ENCODE measurements at regions of chr19 and their contacts with region 1.

Region 1: DNA sequence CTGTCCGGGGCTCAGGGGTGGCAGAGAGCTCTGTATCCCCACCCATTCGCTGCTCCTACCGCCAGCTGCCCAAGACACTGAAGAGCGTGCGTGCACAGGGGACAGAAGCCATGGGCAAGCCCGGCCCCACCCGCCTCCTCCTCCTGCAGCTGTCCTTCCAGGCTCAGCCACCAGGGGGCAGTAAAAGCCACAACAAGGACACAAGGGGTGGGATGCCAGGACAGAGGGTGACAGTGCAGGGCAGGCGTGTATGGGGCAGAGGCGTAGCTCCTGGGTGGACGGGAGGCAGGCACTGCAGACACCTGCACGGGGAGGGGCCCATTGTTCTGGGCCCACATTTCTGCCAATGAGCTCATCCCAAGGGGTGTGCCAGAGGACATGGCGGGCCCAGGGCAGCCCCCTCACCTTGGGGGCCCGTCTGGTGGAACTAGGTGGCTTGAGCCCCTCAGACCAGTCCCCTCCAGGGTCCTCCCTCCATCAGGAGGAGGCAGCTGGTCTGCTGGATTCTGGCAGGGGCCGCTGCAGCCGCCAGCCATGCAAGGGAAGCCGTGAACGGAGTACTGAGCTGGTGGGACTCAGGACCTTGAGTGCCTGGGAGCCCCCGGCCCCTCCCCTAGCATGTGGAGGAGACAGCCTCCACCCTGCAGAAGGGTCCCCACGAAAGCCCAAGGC is 61.1 kb downstream of the MLLT1 start:
- DNase-seq: peak; percentile 89
- H3K4me3 Mint-ChIP-seq: no peak overlapping the region
- H3K27ac Mint-ChIP-seq: no peak overlapping the region
- H3K4me1 Mint-ChIP-seq: no peaks in the 10 kb centered on the region
- H3K27me3 Mint-ChIP-seq: no peaks in the 10 kb centered on the region

Region 2: DNA sequence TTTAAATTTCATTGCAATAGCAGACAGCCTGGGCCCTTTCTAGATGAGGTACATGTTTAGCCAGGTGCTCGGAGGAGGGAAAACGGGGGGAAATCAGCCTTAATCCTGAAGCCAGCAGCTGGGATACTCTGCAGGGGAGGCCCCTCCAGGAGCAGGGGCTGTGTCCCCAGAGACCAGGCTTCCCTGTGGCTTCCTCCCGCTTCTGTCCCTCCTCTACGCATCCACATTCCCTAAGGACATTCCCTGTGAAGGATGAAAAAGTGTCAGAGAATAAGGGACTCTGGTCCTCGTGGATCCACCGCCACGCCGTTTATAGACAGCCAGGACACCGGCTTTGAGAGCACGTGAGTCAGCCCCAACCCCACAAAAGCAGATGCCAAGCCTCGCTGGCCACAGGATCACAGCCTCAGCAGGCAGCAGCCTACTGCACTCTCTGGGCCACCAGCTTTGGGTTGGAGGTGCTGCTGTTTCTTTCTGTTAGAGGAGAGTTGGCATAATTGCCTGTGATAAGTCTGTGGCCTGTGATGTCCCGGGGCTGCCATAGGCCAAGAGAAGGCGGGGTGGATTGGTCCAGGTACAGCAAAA is 204.0 kb before region 1 on chr19:
- CTCF ChIA-PET with region 1: no interaction called
- POLR2A ChIA-PET with region 1: no interaction called
- intact Hi-C with region 1: no loop called
- DNase-seq: no peak
- H3K4me3 Mint-ChIP-seq: no peak overlapping the region
- H3K27ac Mint-ChIP-seq: no peak overlapping the region
- H3K4me1 Mint-ChIP-seq: no peaks in the 10 kb centered on the region
- H3K27me3 Mint-ChIP-seq: peaks cover 1% of the 10 kb centered on the region

Region 3: DNA sequence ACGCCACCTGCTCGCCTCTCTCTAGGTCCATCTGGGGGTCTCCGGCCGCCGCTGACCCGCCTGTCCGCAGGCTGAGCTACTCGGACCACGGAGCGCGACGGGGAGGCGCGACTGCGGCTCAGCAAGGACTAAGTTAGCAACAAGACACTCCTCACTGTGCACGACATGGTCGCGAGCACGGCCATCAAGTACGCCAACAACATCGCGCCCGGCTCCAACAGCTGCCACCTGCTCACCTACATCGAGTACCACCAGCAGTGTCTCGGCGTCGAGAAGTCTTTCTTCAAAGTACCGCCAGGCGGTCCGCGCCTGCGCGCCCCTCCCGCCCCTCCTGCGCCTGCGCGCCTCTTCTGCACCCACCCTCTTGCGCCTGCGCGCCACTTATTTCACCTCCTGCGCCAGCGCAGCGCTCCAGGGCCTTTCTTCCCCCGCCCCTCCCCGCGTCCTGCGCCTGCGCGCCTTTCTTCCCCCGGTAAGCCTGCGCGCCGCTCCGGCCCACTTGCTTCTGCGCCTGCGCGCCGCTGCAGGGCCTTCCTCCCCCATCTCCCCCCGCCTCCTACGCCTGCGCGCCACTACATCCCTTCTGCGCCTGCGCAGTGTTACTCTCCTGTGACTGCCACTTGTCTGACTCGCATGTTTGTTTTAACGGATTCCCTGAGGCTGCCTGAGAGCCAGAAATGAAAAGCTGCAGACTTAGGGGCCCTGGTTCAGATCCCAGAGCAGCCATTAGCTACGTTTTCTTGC is 19.2 kb before region 1 on chr19:
- CTCF ChIA-PET with region 1: interaction called, 16 read pairs
- POLR2A ChIA-PET with region 1: no interaction called
- intact Hi-C with region 1: no loop called
- DNase-seq: peak; percentile 100
- H3K4me3 Mint-ChIP-seq: peak overlapping the region; percentile 98
- H3K27ac Mint-ChIP-seq: peak overlapping the region; percentile 84
- H3K4me1 Mint-ChIP-seq: peaks cover 13% of the 10 kb centered on the region
- H3K27me3 Mint-ChIP-seq: peaks cover 1% of the 10 kb centered on the region

Region 4: GRCh38 chr19:6233827-6234511 is 15.3 kb after region 1 on chr19:
- CTCF ChIA-PET with region 1: interaction called, 12 read pairs
- POLR2A ChIA-PET with region 1: no interaction called
- intact Hi-C with region 1: no loop called
- DNase-seq: no peak
- H3K4me3 Mint-ChIP-seq: no peak overlapping the region
- H3K27ac Mint-ChIP-seq: no peak overlapping the region
- H3K4me1 Mint-ChIP-seq: peaks cover 30% of the 10 kb centered on the region
- H3K27me3 Mint-ChIP-seq: no peaks in the 10 kb centered on the region